Activated T-helper 1 cell treated with anti-CD3 and anti-CD28 coated beads, Interleukin-12 subunit alpha, Interleukin-12 subunit beta, Interleukin-2, Interleukin-4 antibody, amounts not matched to agents 30 ng/mL and 10 ng/mL and 1 ng/mL, durations not matched to agents 14 hours and 24 hours and 36 hours (primary cell): ENCODE measurements at regions of chr9 and their contacts with region 1.

Region 1: GRCh38 chr9:109119439-109120203 is at the start of gene TMEM245:
- DNase-seq: peak; percentile 91
- H3K4me3 Mint-ChIP-seq: peak within 1 kb of the TSS; percentile 95
- H3K27ac Mint-ChIP-seq: peak within 1 kb of the TSS; percentile 87
- H3K4me1 Mint-ChIP-seq: peaks cover 33% of the 10 kb centered on the region
- H3K27me3 Mint-ChIP-seq: no peaks in the 10 kb centered on the region
- total RNA-seq, gene TMEM245: 26.9 and 29.4 TPM in 2 replicates

Region 2: DNA sequence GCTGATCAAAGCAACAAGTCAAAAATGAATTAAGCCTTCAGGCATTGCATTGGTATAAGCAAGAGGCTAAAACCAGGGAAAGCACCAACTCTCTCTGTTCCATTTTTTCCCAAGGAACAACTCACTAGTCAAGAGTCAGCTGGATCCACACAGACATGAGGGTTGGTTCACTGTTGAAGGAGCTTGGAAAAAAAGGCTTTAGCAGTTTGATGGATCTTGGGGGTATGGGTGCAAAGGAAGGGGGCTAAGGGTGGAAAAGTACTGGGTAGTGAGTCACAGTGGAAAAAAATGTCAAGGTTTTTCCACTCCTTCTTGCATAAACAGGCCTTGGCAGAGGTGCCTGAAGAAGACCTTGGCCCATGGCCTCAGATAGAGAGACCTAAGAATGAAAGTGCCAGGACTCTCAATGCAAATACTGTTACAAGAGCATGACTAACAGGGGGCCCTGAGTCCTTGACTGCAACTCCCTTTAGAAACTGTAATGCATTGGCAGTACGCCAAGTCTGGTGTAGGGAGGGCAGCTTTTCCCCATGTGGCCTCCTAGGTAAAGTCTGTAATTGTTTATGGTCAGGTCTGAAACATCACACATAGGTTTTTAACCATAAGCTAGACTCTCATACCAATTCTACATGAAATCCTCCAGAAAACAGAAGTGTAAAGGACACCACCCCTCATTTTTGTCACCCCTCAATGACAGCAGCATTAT is 233.8 kb before region 1 on chr9:
- intact Hi-C with region 1: loop called (anchors 5 kb)
- DNase-seq: no peak
- H3K4me3 Mint-ChIP-seq: peak overlapping the region; percentile 8
- H3K27ac Mint-ChIP-seq: peak overlapping the region; percentile 80
- H3K4me1 Mint-ChIP-seq: peaks cover 16% of the 10 kb centered on the region
- H3K27me3 Mint-ChIP-seq: no peaks in the 10 kb centered on the region

Region 3: GRCh38 chr9:109052416-109052815 is 67.2 kb before region 1 on chr9:
- intact Hi-C with region 1: loop called (anchors 5 kb)
- DNase-seq: no peak
- H3K4me3 Mint-ChIP-seq: no peak overlapping the region
- H3K27ac Mint-ChIP-seq: no peak overlapping the region
- H3K4me1 Mint-ChIP-seq: peaks cover 5% of the 10 kb centered on the region
- H3K27me3 Mint-ChIP-seq: no peaks in the 10 kb centered on the region

Region 4: GRCh38 chr9:109101810-109102209 is 17.8 kb before region 1 on chr9:
- intact Hi-C with region 1: loop called (anchors 1 kb)
- DNase-seq: peak; percentile 14
- H3K4me3 Mint-ChIP-seq: peak overlapping the region; percentile 46
- H3K27ac Mint-ChIP-seq: peak overlapping the region; percentile 73
- H3K4me1 Mint-ChIP-seq: peaks cover 65% of the 10 kb centered on the region
- H3K27me3 Mint-ChIP-seq: no peaks in the 10 kb centered on the region

Region 5: DNA sequence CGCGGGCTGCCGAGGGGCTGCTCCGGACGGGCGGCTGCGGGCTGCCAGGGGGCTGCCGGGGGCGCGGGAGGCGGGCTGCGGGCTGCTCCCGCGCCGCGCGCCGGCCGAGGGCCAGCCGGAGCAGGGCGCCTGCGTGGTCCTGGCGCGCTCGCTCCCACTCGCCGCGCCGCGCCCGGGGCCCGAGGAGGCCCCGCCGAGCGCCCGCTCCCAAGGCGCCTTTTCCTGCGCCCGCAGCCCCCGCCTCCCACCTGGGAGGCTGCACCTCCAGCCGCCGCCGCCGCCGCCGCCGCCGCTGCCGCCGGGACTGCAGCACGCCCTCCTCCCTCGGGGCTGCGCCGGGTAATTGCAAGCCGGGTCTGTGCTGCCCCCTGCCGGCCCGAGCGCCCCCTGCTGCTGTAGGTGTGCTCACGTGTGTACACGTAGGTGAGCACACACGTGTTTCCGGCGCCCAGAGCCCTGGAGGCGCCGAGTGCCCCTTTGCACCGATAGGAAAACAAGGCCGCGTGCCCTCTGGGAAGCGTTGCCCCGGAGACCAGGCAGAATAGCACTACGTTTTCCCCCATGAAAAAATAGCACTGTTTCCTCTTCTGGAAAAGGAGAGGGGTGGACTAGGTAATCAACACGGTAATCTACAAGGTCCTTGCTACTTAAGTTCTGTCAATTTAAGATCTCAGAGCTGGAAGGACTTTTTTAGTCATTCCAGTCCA is 201.3 kb after region 1 on chr9 and contains the start of gene EPB41L4B:
- intact Hi-C with region 1: loop called (anchors 2 kb)
- DNase-seq: peak; percentile 85
- H3K4me3 Mint-ChIP-seq: peak within 1 kb of the TSS; percentile 84
- H3K27ac Mint-ChIP-seq: peak within 1 kb of the TSS; percentile 72
- H3K4me1 Mint-ChIP-seq: peaks cover 23% of the 10 kb centered on the region
- H3K27me3 Mint-ChIP-seq: peaks cover 69% of the 10 kb centered on the region
- total RNA-seq, gene EPB41L4B: 2.0 and 2.2 TPM in 2 replicates